ENCODE measurements at regions of chr1 and their contacts with region 1.

Region 1: GRCh38 chr1:1173793-1174415 is at the start of gene TTLL10:
- DNase-seq: peak; percentile 35
- H3K4me3 ChIP-seq: no peak within 1 kb of the TSS
- H3K27ac ChIP-seq: no peak within 1 kb of the TSS
- H3K4me1 ChIP-seq: peaks cover 6% of the 10 kb centered on the region
- H3K27me3 ChIP-seq: peaks cover 11% of the 10 kb centered on the region
- CTCF ChIP-seq: no peak
- total RNA-seq, gene TTLL10: 0.64 to 2.3 TPM

Region 2: DNA sequence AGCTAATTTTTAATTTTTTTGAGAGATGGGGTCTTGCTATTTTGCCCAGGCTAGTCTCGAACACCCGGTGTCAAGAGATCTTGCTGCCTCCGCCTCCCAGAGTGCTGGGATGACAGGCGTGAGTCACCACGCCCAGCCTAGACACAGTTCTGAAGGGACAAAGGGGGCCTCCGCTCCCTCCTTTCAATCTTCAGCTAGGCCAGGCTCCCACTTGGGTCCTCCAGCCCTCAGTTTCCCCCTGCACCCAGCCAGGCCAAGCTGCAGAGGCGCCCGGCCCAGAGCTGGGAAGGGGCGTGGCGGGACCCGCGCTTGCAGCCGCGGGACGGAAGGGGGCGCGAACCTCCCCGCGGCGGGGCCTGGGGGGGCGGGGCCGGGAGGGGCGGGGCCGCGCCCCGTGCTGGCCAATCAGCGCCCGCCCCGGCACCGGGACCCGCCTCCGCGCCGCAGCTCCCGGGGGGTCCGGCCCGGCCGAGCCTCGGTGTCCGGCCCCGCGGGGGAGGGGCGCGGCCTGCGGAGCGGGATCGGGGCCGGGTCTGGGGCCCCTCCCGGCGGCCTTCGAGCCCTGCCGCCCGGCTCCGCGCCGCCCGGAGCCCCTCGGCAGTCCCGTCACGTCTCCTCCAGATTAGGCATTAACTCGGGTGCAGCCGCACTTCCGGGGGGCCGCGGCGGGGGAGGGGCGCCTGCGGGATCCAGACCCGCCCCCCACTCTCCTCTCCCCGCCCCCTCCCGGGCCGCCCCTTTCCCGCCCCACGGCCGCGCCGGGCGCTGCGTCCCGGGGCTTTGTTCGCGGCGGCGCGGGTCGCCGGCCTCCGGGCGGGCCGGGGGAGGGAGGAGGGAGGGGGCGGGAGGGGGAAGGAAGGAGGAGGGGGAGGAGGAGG is 154.5 kb before region 1 on chr1:
- intact Hi-C with region 1: no loop called
- DNase-seq: peak; percentile 81
- H3K4me3 ChIP-seq: peak overlapping the region; percentile 75
- H3K27ac ChIP-seq: peak overlapping the region; percentile 85
- H3K4me1 ChIP-seq: peaks cover 6% of the 10 kb centered on the region
- H3K27me3 ChIP-seq: no peaks in the 10 kb centered on the region
- CTCF ChIP-seq: peak; percentile 19

Region 3: GRCh38 chr1:1225238-1225845 is 51.4 kb after region 1 on chr1:
- intact Hi-C with region 1: loop called (anchors 10 kb)
- DNase-seq: no peak
- H3K4me3 ChIP-seq: no peak overlapping the region
- H3K27ac ChIP-seq: no peak overlapping the region
- H3K4me1 ChIP-seq: peaks cover 15% of the 10 kb centered on the region
- H3K27me3 ChIP-seq: no peaks in the 10 kb centered on the region
- CTCF ChIP-seq: no peak

Region 4: GRCh38 chr1:1678581-1679390 is 504.9 kb after region 1 on chr1:
- intact Hi-C with region 1: no loop called
- DNase-seq: peak; percentile 93
- H3K4me3 ChIP-seq: peak overlapping the region; percentile 4
- H3K27ac ChIP-seq: peak overlapping the region; percentile 80
- H3K4me1 ChIP-seq: peaks cover 10% of the 10 kb centered on the region
- H3K27me3 ChIP-seq: no peaks in the 10 kb centered on the region
- CTCF ChIP-seq: peak; percentile 37

Measured in colonic mucosa (tissue), 4 donors.